HepG2 (cell line): ENCODE measurements at regions of chr4 and their contacts with region 1.

Region 1: DNA sequence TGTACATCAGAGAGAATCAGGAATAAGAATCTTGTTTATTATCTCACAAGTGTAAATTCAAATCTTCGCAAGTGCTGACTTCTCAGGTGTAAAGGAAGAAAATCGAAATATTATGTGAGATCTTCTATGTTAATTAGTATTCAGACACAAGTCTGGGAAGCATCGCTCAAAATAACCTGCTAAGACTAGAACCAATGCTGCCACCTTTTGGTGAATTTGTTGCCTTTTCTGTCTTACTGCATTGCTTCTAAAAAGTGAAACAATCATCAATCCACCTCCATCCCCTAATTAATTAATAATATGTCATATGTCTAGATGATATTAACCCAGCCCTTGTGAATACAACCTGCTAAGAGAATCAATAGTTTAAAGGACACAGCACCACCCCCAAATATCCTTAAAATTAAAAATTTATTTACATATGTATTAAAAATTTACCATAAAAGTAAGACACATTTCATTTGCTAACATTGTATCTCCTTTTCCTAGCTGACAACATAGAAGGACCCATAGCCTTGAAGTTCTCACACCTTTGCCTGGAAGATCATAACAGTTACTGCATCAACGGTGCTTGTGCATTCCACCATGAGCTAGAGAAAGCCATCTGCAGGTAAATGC is 3.5 kb downstream of the EPGN start:
- DNase-seq: peak; percentile 46
- ATAC-seq: peak; percentile 60; the same call in 2 of the 3 replicates
- H3K4me3 ChIP-seq: no peak overlapping the region
- H3K27ac ChIP-seq: no peak overlapping the region
- H3K4me1 ChIP-seq: no peaks in the 10 kb centered on the region
- H3K27me3 ChIP-seq: no peaks in the 10 kb centered on the region
- CTCF ChIP-seq: peak; percentile 66
- EP300 ChIP-seq: no peak
- POLR2A ChIP-seq: no peak
- RAD21 ChIP-seq: 0 out of 2 replicates have a peak, but pooled peaks have one; percentile 24

Region 2: GRCh38 chr4:74228691-74229640 is 82.8 kb before region 1 on chr4:
- CTCF ChIA-PET with region 1: interaction called, 16 read pairs
- POLR2A ChIA-PET with region 1: no interaction called
- in situ Hi-C with region 1: no loop called
- intact Hi-C with region 1: loop called (anchors 1 kb)
- DNase-seq: peak; percentile 58
- ATAC-seq: peak; percentile 90
- H3K4me3 ChIP-seq: no peak overlapping the region
- H3K27ac ChIP-seq: no peak overlapping the region
- H3K4me1 ChIP-seq: no peaks in the 10 kb centered on the region
- H3K27me3 ChIP-seq: no peaks in the 10 kb centered on the region
- CTCF ChIP-seq: peak; percentile 74
- EP300 ChIP-seq: no peak
- POLR2A ChIP-seq: no peak
- RAD21 ChIP-seq: no peak

Region 3: DNA sequence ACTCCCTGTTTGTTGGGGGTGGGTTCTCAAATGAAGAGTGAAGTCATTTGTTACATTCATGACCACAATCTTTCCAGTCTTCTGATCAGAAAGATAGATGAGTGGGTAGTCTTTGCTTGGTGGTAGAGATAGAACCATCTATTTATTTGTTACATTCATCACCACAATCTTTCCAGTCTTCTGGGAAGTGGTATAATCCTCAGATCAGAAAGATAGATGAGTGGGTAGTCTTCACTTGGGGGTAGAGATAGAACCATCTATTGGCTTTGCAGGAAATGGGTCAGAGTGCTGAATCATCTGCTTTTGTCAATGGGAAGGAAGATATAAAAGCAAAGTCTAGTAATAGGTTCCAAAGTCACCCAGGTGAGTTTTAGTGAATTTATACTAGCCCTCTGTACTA is 67.8 kb before region 1 on chr4:
- CTCF ChIA-PET with region 1: no interaction called
- POLR2A ChIA-PET with region 1: no interaction called
- in situ Hi-C with region 1: no loop called
- intact Hi-C with region 1: no loop called
- DNase-seq: no peak
- ATAC-seq: no peak
- H3K4me3 ChIP-seq: no peak overlapping the region
- H3K27ac ChIP-seq: no peak overlapping the region
- H3K4me1 ChIP-seq: no peaks in the 10 kb centered on the region
- H3K27me3 ChIP-seq: no peaks in the 10 kb centered on the region
- CTCF ChIP-seq: no peak
- EP300 ChIP-seq: no peak
- POLR2A ChIP-seq: no peak
- RAD21 ChIP-seq: no peak